Transverse colon (tissue), 4 donors: ENCODE measurements at regions of chr20 and their contacts with region 1.

Region 1: DNA sequence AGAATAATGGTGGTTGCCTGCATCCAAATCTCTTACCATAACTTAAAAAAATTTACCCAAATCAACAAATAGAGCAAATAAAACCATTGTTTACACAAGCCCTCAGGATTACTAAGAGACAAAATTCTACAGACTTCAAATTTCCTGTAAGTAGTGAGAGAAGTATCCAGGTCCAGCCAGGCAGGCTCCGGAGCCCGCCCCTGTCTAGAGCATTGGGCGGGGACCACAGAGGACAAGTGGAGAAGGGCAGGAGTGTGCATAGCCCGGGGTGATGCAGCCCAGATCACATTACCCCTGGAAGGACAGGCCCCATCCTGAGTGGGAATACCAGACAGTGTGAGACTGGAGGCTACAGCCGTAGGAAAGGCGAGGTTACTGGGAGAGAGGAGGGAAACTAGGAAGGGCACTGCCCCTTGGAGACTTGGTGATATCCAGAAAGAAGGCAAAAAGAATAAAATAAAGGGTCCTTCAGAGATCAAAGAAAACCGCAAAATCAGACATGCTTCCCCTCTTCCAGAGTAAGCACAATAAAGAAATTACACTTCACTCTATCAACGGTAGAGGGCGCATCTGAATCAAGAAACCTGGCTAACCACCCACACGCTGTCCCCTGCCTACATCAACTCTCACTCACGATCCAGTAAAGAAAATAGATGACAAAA is 26.6 kb downstream of the RIN2 start:
- DNase-seq: peak; percentile 36
- H3K4me3 ChIP-seq: no peak overlapping the region
- H3K27ac ChIP-seq: peak overlapping the region; percentile 45 to 71 (median 60)
- H3K4me1 ChIP-seq: peaks cover 8 to 38% (median 25%) of the 10 kb centered on the region in 4 donors
- H3K27me3 ChIP-seq: no peaks in the 10 kb centered on the region
- CTCF ChIP-seq: peak; percentile 72 to 83 (median 82)
- EP300 ChIP-seq: no peak
- POLR2A ChIP-seq: no peak

Region 2: GRCh38 chr20:19761841-19762240 is 22.8 kb before region 1 on chr20:
- in situ Hi-C with region 1: no loop called
- intact Hi-C with region 1: no loop called
- DNase-seq: no peak
- H3K4me3 ChIP-seq: no peak overlapping the region
- H3K27ac ChIP-seq: no peak overlapping the region
- H3K4me1 ChIP-seq: peaks cover 8 to 35% (median 23%) of the 10 kb centered on the region in 4 donors
- H3K27me3 ChIP-seq: no peaks in the 10 kb centered on the region
- CTCF ChIP-seq: no peak
- EP300 ChIP-seq: no peak
- POLR2A ChIP-seq: no peak

Region 3: DNA sequence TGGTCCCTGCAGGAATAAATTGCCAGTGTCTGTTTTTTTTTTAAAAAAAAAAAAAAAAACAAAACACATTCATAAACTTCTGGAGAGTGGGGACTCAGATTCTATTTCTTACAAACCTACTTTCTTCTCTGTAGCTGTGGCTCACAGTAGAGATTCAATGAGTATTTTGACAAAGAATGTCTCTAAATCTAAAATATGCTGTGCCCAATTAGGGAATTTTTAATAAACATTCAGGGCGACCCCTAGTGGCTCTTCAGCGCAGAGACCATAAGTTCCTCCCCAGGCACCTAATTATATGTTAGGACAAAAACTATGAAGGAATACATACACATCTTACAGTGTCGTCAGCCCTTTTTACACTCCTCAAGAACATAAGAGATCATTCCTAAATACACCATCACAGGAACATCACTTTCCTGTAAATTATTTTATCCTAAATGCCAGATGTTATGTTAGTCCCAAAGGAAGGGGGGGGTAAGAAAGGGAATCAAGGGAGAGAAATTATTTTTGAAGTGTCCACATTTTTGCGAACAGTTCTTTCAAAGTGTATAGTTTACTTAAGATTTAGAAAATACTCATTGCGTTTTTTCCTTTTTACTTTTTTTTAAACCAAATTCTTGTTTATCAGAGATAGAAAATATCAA is 210.7 kb after region 1 on chr20:
- in situ Hi-C with region 1: loop called in 3 of 4 experiments (anchors 5 to 10 kb)
- intact Hi-C with region 1: loop called (anchors 5 kb)
- DNase-seq: no peak
- H3K4me3 ChIP-seq: no peak overlapping the region
- H3K27ac ChIP-seq: peak overlapping the region; percentile 49 to 84 (median 73)
- H3K4me1 ChIP-seq: peaks cover 16 to 55% (median 21%) of the 10 kb centered on the region in 4 donors
- H3K27me3 ChIP-seq: no peaks in the 10 kb centered on the region
- CTCF ChIP-seq: peak; percentile 73 to 86 (median 75)
- EP300 ChIP-seq: no peak
- POLR2A ChIP-seq: no peak

Region 4: GRCh38 chr20:20003031-20003954 is 218.7 kb after region 1 on chr20:
- in situ Hi-C with region 1: loop called in 3 of 4 experiments (anchors 5 to 10 kb)
- intact Hi-C with region 1: loop called (anchors 5 kb)
- DNase-seq: peak; percentile 27
- H3K4me3 ChIP-seq: no peak overlapping the region
- H3K27ac ChIP-seq: peak overlapping the region; percentile 49 to 74 (median 64)
- H3K4me1 ChIP-seq: peaks cover 4 to 27% (median 9%) of the 10 kb centered on the region in 4 donors
- H3K27me3 ChIP-seq: no peaks in the 10 kb centered on the region
- CTCF ChIP-seq: no peak
- EP300 ChIP-seq: no peak
- POLR2A ChIP-seq: no peak